GM12878 (cell line): ENCODE measurements at regions of chr10 and their contacts with region 1.

Region 1: DNA sequence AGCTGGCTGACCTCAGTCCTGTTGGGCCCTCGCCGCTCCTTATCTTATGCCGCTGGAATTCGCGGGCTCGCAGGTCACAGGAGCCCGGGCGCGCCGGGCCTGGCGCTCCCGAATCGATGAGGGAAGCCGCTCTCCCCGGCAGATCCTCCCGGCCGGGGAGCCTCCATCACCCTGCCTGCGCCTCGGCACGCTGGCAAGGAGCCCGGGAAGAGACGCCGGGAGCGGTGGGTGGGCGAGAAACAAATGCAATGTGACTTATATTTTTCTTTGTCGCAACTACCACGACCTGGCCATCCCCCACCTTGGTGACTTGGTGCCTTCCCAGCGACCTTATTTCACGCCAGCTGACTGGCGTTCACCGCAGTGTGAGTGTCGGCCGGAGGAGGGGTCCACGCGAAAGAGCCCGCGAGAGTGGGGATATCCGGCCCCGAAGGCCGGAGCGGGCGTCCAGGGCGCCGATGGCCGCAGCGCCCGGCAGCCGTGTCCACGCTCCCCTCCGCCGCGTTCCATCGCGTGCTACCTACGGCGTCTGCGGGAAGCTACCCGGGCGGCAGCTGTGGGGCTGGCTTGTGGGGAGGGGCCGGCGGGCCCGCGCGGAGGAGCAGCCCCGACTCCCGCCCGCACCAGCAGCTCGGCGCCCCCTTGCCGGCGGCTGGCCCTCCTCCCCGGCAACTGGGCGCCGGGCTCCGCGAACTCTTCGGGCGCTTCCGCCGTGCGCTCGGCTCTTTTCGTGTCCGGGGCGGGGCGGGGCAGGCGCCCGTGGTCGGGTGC is 494 bp upstream of the BMPR1A start:
- DNase-seq: no peak
- ATAC-seq: peak; percentile 85
- H3K4me3 ChIP-seq: peak overlapping the region; percentile 77
- H3K27ac ChIP-seq: peak overlapping the region; percentile 79
- H3K4me1 ChIP-seq: peaks cover 19% of the 10 kb centered on the region
- H3K27me3 ChIP-seq: no peaks in the 10 kb centered on the region
- CTCF ChIP-seq: no peak
- EP300 ChIP-seq: no peak
- POLR2A ChIP-seq: peak; percentile 79
- RAD21 ChIP-seq: no peak

Region 2: GRCh38 chr10:86710987-86711512 is 44.9 kb before region 1 on chr10:
- CTCF ChIA-PET with region 1: interaction called, 7 read pairs
- POLR2A ChIA-PET with region 1: interaction called, 13 read pairs
- RAD21 ChIA-PET with region 1: interaction called, 16 read pairs
- SMC1A ChIA-PET with region 1: interaction called, 9 read pairs
- in situ Hi-C with region 1: no loop called
- intact Hi-C with region 1: loop called (anchors 2 kb)
- DNase-seq: peak; percentile 45
- ATAC-seq: peak; percentile 94
- H3K4me3 ChIP-seq: peak overlapping the region; percentile 92
- H3K27ac ChIP-seq: peak overlapping the region; percentile 73
- H3K4me1 ChIP-seq: peaks cover 4% of the 10 kb centered on the region; the same call in 1 of the 2 replicates
- H3K27me3 ChIP-seq: no peaks in the 10 kb centered on the region
- CTCF ChIP-seq: peak; percentile 73 to 98 (median 90); a peak in 5 of 6 replicates
- EP300 ChIP-seq: no peak
- POLR2A ChIP-seq: peak; percentile 81
- RAD21 ChIP-seq: peak; percentile 77

Region 3: DNA sequence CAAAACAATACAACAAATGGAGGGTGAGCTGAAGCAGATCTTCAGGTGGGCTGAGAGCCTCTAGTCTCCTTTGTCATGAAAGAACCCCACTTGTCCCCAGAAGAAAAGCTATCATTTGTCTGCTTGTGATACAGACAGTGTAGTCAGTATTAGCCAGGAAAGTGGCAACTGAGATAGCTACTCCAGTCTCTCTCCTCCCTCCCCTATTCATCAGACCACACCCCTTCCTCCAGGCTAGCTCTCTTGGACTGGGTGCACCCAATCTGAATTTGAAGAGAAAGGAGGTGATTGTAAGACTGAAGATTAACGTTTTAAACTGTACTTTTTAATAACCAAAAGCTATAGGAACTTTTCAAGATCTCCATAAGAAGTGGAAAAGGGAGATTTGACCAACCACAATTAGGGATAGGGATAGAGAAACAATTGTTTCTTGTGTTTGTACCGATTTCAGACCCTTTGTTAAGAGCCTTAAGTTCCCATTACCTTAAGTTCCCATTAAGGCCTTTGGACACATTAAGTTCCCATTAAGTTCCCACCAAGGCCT is 14.6 kb after region 1 on chr10:
- CTCF ChIA-PET with region 1: interaction called, 6 read pairs
- POLR2A ChIA-PET with region 1: interaction called, 5 read pairs
- RAD21 ChIA-PET with region 1: no interaction called
- SMC1A ChIA-PET with region 1: interaction called, 11 read pairs
- in situ Hi-C with region 1: no loop called
- intact Hi-C with region 1: no loop called
- DNase-seq: no peak
- ATAC-seq: peak; percentile 66
- H3K4me3 ChIP-seq: no peak overlapping the region
- H3K27ac ChIP-seq: no peak overlapping the region
- H3K4me1 ChIP-seq: peaks cover 27% of the 10 kb centered on the region
- H3K27me3 ChIP-seq: no peaks in the 10 kb centered on the region
- CTCF ChIP-seq: no peak
- EP300 ChIP-seq: no peak
- POLR2A ChIP-seq: no peak
- RAD21 ChIP-seq: no peak

Region 4: DNA sequence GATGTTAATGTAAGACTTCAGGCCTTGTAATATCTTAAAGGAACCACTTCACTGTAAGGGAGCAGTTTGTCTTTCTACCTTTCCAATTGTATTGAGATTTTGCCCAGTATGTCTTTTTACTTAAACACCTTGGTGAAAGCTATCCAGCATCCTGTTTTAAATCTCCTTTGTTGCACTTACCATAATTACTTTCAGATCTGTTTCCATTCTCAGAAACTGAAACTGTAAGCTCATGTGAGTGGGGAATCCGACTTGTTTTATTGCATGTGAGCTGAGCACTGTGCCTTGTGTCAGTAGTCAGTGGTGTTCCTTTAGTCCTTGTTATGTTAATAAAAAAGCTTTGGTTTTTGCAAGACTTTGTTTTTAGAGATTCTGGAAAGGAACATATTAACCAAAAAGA is 42.7 kb after region 1 on chr10:
- CTCF ChIA-PET with region 1: no interaction called
- POLR2A ChIA-PET with region 1: interaction called, 6 read pairs
- RAD21 ChIA-PET with region 1: interaction called, 6 read pairs
- SMC1A ChIA-PET with region 1: interaction called, 11 read pairs
- in situ Hi-C with region 1: no loop called
- intact Hi-C with region 1: loop called (anchors 1 kb)
- DNase-seq: peak; percentile 57
- ATAC-seq: peak; percentile 92
- H3K4me3 ChIP-seq: peak overlapping the region; percentile 12; the same call in 1 of the 2 replicates
- H3K27ac ChIP-seq: peak overlapping the region; percentile 57
- H3K4me1 ChIP-seq: peaks cover 6% of the 10 kb centered on the region; the same call in 1 of the 2 replicates
- H3K27me3 ChIP-seq: no peaks in the 10 kb centered on the region
- CTCF ChIP-seq: no peak
- EP300 ChIP-seq: no peak; a peak in 1 of 4 replicates
- POLR2A ChIP-seq: no peak
- RAD21 ChIP-seq: no peak

Region 5: GRCh38 chr10:86922553-86922961 is 166.6 kb after region 1 on chr10:
- CTCF ChIA-PET with region 1: no interaction called
- POLR2A ChIA-PET with region 1: no interaction called
- RAD21 ChIA-PET with region 1: no interaction called
- SMC1A ChIA-PET with region 1: no interaction called
- in situ Hi-C with region 1: no loop called
- intact Hi-C with region 1: no loop called
- DNase-seq: no peak
- ATAC-seq: no peak
- H3K4me3 ChIP-seq: no peak overlapping the region
- H3K27ac ChIP-seq: no peak overlapping the region
- H3K4me1 ChIP-seq: no peaks in the 10 kb centered on the region
- H3K27me3 ChIP-seq: no peaks in the 10 kb centered on the region
- CTCF ChIP-seq: no peak
- EP300 ChIP-seq: no peak
- POLR2A ChIP-seq: no peak
- RAD21 ChIP-seq: no peak